Mammary epithelial cell (primary cell): ENCODE measurements at regions of chr10 and their contacts with region 1.

Region 1: DNA sequence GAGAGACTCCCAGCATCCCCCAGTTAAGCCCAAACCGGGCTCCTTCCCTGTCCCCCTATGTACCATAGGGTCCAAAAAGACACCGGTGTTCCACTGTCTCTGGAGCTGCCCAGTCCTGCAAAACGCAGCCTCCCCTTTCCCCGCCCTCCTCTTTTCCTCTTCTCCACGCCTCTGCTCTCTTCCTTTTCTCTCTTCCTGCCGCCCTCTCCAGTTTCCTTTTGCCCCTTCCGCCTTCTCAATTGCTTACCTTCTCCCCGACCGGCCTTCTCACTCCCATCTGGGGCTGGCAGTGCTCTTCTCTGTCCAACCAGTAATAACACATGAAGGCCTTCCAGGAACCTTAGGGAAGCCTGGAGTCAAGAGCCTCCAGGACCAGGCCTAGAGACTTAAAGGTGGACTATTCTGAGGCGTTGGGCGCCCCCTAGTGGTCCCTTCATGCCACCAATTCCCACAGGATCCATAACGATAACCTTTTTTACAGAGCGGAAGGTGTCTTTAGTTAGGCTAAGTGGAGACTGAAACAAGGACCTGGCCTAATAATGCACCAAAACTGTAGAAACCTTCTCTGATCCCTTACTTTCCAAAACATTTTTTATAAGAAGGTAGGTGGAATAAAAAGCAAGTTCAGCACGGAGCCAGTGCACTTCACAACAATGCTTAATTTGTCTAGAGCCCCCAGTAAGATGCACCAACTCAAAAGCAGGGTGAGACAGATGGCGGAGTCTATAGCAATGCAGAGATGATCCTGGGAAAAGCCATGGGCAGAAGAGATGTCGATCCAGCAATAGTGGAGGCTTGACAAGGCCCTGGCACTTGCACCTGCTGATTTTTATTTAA is 27.2 kb upstream of the MSRB2 start:
- DNase-seq: peak; percentile 51
- H3K4me3 ChIP-seq: no peak overlapping the region
- H3K27ac ChIP-seq: no peak overlapping the region
- H3K4me1 ChIP-seq: no peaks in the 10 kb centered on the region
- H3K27me3 ChIP-seq: no peaks in the 10 kb centered on the region
- CTCF ChIP-seq: peak; percentile 78 to 90

Region 2: DNA sequence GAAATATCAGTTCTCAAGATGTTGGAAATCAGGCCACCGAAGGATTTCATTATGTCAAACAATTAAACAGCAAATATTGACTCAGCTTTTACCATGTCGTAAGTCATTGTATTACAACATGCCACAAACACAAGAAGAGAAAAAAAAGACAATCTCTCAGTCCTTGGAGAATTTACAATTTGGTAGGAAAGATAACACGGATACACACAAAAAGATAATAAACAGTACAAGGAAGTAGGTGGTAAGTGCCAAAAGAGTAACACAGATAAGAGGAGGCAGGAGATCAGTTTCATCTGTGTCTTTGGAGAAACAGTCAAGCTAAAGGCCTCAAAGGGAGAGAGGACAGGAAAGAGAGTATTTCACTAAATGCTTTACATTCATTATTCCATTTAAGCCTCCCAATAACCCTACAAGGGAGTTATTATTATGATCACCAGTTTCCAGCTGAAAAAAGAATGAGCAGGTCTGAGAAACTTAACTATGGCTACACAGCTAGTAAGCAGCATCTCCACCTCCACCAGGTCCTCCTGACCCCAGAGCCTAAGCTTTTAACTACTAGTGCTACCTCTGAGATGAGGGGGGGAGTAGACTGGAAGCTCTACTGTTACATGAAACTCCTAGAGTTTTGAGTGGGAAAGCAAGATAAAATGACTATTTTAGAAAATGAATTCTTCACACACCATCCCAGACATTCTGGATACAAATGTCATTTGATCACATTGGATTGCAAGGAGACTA is 1050.7 kb before region 1 on chr10:
- CTCF ChIA-PET with region 1: no interaction called
- dilution Hi-C with region 1: no loop called
- in situ Hi-C with region 1: no loop called
- intact Hi-C with region 1: loop called (anchors 5 kb)
- DNase-seq: no peak
- H3K4me3 ChIP-seq: no peak overlapping the region
- H3K27ac ChIP-seq: no peak overlapping the region
- H3K4me1 ChIP-seq: no peaks in the 10 kb centered on the region
- H3K27me3 ChIP-seq: no peaks in the 10 kb centered on the region
- CTCF ChIP-seq: no peak

Region 3: DNA sequence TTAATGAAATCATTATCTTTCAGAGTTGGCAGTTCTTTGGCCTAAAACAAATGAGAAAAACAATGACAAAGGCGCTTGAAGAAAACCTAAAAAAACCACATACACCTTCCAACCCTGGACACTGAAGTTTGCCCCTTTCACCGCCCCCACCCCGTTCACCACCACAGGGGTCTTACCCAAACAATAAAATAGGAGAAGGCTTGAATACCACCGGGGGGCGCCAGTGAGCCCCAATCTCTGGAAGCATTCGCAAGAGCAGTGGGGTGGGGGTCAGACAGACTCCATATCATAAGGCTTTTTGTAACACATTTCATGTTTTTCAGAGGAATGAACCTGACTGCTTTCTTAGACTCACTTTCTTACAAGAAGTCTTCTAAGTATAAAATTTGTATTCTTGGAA is 517.4 kb before region 1 on chr10:
- CTCF ChIA-PET with region 1: no interaction called
- dilution Hi-C with region 1: no loop called
- in situ Hi-C with region 1: no loop called
- intact Hi-C with region 1: loop called (anchors 10 kb)
- DNase-seq: no peak
- H3K4me3 ChIP-seq: no peak overlapping the region
- H3K27ac ChIP-seq: no peak overlapping the region
- H3K4me1 ChIP-seq: no peaks in the 10 kb centered on the region
- H3K27me3 ChIP-seq: no peaks in the 10 kb centered on the region
- CTCF ChIP-seq: peak; percentile 39 to 53